Activated T-helper 2 cell treated with anti-CD3 and anti-CD28 coated beads, Interferon-gamma antibody, Interleukin-2, Interleukin-4, amounts not matched to agents 10 μg/mL and 5 μg/mL and 100 μg/mL, durations not matched to agents 14 hours and 24 hours and 36 hours (primary cell): ENCODE measurements at regions of chr1 and their contacts with region 1.

Region 1: DNA sequence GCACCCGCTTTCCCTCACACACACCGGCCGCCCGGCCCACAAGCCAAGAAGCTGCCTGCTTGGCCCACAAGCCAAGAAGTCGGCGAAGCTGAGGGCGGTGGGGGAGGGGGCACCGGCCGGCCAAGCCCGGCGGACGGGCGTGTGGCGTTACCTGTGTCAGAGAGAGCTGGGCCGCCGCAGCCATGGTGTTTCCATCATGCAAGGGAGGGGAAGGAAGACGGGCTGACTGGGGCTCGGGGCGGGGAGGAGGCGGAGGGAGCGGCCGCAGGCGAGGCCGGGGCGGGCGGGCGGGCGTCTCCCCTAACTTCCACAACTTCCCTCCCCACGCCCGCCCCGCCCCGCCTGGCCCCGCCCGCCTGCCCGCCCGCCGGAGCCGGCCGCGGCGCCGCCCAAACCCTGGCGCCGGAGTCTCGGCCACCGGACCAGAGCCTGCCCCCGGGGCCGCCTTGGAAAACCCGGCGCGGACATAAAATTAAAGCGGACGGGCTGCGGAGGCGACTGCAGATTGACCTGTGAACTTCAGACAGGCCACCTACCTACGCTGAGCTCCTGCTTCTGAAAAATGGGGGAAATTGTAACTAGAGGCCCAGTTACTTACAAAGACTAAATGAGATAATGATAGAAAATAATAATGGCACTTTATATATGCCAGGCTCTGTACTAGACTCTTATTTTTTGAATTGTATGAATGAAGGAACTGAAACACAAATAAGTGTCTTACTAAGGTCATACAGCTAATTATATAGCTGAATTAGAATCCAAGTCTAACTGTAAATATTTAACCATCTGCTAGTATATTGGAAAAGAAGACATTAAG is at the start of gene EPS15:
- DNase-seq: peak; percentile 83
- H3K4me3 Mint-ChIP-seq: peak within 1 kb of the TSS; percentile 93
- H3K27ac Mint-ChIP-seq: peak within 1 kb of the TSS; percentile 88
- H3K4me1 Mint-ChIP-seq: peaks cover 51% of the 10 kb centered on the region
- H3K27me3 Mint-ChIP-seq: no peaks in the 10 kb centered on the region
- total RNA-seq, gene EPS15: 50.1 and 54.1 TPM in 2 replicates

Region 2: DNA sequence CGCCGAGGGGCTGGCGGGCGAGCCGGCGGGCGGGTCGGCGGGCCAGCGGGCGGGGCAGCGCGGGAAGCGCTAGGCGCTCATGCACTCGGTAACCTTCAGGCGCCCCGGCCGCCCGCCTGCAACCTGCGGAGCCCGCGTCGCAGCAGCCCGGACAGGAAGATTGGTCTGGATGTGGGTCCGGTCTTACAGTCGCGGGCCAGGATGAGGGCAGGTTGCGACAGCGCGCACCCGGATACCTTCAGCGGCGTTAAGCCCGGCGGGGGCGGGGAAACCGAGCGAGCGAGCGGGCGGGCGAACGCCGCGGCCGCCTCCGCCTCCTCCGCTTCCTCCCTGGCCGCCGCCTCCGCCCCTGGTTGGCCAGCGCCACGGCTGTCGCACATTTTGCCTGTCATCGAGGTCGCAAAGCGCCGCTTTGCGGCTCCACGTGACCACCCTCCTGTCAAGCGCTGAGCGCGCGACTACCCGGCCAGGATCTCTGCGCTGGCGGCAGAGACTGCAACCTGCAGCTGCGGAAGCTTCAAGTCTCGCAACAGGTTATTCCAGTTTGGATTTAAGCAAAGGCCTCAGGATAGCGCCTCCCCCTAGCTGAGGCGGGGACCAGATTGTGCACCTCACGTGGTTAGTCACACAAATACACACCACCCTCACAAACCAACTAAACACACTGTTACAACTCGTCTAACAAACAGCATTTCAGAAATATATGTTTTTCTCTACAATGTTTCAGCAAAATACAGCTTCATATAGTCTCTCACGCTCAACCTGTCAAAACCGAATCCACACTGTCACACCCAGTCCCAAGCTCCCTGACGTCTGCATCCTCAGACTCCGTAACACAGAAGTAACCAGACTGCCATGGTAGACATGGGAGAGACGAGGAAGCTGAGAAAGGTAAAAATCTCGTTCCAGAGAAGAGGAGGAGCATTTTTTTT is 559.1 kb before region 1 on chr1 and contains the start of gene FAF1:
- intact Hi-C with region 1: loop called (anchors 10 kb)
- DNase-seq: peak; percentile 98
- H3K4me3 Mint-ChIP-seq: peak within 1 kb of the TSS; percentile 87
- H3K27ac Mint-ChIP-seq: peak within 1 kb of the TSS; percentile 77
- H3K4me1 Mint-ChIP-seq: peaks cover 19% of the 10 kb centered on the region
- H3K27me3 Mint-ChIP-seq: no peaks in the 10 kb centered on the region
- total RNA-seq, gene FAF1: 59.7 and 65.3 TPM in 2 replicates

Region 3: DNA sequence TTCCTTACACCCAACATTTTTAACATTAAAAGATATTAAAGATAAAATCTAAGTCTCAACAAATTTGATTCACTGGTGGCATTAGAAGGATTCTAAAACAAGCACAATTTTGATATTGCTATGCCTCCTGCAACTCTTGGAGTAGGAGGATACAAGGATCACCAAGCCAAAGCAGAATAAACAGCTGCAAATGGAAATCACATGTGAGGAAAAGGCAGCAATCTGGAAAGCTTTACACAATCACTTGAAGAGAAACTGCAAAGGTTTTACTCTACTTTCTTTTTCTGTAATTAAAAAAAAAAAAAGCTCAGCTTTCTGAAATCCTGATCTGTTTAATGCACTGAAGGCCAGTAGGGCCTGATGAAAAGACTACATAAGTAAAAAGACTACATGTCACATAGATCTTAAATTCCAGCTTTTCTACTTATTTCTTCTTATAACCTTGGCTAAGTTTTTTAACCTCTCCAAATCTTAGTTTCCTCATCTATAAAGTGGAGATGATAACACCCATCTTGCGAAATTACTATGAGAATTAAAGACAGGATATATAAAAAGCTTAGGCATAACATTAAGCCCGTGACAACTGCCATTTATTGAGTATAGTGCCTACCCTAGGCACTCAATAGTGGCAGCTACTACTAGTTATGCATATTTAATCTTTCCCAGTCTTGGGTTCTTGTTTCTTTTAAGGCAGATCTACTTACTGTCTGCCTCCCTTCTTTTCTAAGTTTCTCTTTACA is 73.7 kb before region 1 on chr1:
- intact Hi-C with region 1: loop called (anchors 2 kb)
- DNase-seq: no peak
- H3K4me3 Mint-ChIP-seq: no peak overlapping the region
- H3K27ac Mint-ChIP-seq: no peak overlapping the region
- H3K4me1 Mint-ChIP-seq: peaks cover 53% of the 10 kb centered on the region
- H3K27me3 Mint-ChIP-seq: no peaks in the 10 kb centered on the region

Region 4: GRCh38 chr1:51504806-51505525 is 14.3 kb before region 1 on chr1:
- intact Hi-C with region 1: loop called (anchors 2 kb)
- DNase-seq: no peak
- H3K4me3 Mint-ChIP-seq: no peak overlapping the region
- H3K27ac Mint-ChIP-seq: peak overlapping the region; percentile 60
- H3K4me1 Mint-ChIP-seq: peaks cover 16% of the 10 kb centered on the region
- H3K27me3 Mint-ChIP-seq: no peaks in the 10 kb centered on the region

Region 5: DNA sequence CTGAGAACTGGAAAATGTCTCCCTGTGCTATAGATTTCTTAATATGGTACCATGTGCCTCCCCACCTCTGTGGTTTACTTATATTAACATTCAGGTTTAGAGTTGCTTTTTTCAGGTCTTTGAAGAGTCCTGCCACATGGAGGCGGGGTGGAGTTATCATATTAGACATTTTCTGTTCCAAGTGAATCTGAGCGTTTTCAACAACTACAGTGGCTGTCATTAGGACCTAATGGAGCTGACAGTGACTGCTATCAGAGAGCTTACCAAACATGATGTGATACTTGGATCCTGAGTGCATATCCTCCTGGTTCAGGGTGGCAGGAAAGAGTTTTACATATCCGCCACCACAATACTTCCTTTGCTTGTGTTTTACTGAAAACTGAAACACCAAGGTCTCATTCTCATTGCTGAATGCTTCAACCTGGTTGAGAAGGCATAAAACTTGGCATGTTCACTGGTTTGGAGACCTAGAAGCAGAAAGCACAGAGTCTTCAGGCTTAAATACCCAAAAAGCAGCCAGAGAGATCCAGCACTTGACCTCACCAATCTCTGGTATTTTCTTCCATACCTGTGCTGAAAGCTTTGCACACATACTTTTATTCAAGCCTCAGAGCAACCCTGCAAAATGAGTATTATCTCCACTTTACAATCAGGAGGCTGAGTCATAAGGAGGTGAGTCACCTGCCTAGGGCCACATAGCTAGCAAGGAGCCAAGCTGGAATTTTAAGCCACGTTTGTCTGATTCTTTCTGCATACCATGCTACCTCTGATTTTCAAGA is 50.2 kb after region 1 on chr1:
- intact Hi-C with region 1: loop called (anchors 5 kb)
- DNase-seq: peak; percentile 22
- H3K4me3 Mint-ChIP-seq: peak overlapping the region; percentile 3
- H3K27ac Mint-ChIP-seq: peak overlapping the region; percentile 72
- H3K4me1 Mint-ChIP-seq: peaks cover 34% of the 10 kb centered on the region
- H3K27me3 Mint-ChIP-seq: no peaks in the 10 kb centered on the region

Region 6: DNA sequence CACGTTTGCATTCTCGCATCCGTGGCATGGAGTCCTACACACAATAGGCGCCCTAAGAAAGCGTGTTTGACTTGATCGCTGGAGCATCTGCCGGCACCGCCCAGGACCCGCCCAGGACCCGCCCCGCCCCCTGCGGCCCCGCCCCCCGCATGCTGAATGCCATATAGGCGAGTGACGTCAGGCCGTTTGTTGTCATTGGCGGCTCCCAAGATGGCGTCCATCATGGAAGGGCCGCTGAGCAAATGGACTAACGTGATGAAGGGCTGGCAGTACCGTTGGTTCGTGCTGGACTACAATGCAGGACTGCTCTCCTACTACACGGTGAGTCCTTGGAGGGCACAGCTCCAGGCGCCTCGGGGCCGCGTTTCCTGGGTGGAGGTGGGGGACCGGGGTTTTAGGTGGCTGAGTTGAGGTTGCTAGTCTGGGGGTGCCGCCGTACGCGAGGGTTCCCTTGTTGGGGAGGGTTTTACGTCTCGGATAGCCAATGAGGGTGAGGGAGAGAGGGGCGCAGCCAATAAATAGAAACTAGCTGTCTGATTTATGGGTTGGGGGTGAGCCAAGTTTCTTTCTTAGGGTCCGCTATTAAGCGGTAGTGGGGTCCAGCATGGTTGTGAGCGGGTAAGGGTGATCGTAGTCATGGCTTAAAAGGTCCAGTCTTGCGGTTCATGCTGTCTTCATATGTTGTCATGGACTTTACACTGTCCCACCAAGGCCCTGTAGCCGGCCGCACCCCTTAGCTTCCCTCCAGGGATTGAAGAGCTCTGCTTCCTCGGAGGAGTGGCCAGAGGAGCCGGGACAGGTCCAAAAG is 97.8 kb after region 1 on chr1 and contains the start of gene OSBPL9:
- intact Hi-C with region 1: loop called (anchors 1 kb)
- DNase-seq: peak; percentile 80
- H3K4me3 Mint-ChIP-seq: peak within 1 kb of the TSS; percentile 99
- H3K27ac Mint-ChIP-seq: peak within 1 kb of the TSS; percentile 97
- H3K4me1 Mint-ChIP-seq: peaks cover 26% of the 10 kb centered on the region
- H3K27me3 Mint-ChIP-seq: peaks cover 6% of the 10 kb centered on the region
- total RNA-seq, gene OSBPL9: 49.3 and 52.3 TPM in 2 replicates